Common myeloid progenitor, CD34-positive (primary cell): ENCODE measurements at regions of chr13 and their contacts with region 1.

Region 1: GRCh38 chr13:48580185-48580803 is 47.4 kb upstream of the RCBTB2 start:
- DNase-seq: peak; percentile 63 to 79 (median 73)
- H3K4me3 ChIP-seq: no peak overlapping the region
- H3K27ac ChIP-seq: no peak overlapping the region
- H3K4me1 ChIP-seq: peaks cover 7 to 28% (median 17%) of the 10 kb centered on the region in 4 experiments
- H3K27me3 ChIP-seq: peaks cover 0 to 21% (median 4%) of the 10 kb centered on the region in 5 experiments

Region 2: DNA sequence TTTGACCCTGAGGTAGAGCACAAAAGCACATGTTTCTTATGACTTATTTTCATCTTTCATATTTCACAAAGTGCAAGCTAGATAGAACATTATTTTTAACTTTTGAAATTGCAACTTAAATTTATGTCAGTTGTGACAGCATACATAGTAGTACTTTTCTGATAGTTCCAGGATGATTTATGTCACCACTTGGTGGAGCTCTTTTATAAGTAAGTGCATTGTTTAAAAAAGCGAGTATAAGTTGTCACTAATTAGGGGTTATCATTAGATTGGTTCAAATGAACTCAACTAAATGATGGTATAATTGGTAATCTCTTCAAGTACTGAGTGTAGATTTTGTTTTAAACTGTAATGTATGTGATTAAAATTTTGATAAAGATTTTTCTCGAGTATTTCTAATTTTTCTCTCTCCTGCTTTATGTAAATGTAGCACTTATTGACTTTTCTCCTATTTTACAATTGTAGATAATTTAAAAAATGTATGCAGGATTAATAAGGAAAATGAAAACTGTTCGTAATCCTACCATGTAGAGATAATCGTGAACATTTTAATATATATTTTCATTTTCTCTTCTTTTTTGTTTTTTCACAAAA is 245.7 kb before region 1 on chr13:
- CTCF ChIA-PET with region 1: interaction called, 72 read pairs
- POLR2A ChIA-PET with region 1: interaction called, 6 read pairs
- DNase-seq: peak; percentile 51 to 77 (median 75)
- H3K4me3 ChIP-seq: no peak overlapping the region
- H3K27ac ChIP-seq: no peak overlapping the region
- H3K4me1 ChIP-seq: peaks cover 0 to 6% (median 0%) of the 10 kb centered on the region in 4 experiments
- H3K27me3 ChIP-seq: no peaks in the 10 kb centered on the region

Region 3: DNA sequence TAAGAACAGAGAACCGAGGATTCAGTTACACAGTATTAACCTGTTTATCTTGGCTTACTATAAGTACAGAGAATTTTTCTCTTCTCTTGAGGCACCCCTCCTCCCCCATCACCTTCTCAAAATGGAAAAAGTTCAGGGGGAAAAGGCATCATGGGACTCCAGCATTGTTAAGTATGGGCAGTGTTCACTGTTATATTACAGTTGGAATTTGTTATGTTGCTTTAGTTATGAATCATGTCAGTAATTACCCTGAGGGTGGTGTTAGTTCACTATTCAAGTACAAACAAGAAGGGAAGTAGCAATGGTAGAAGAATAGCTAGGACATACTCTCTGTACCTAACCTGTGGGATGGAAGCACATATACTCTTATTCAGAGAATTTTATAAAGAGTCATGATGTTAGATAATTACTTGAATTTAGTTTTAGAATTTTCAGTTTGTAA is 179.4 kb before region 1 on chr13:
- CTCF ChIA-PET with region 1: interaction called, 45 read pairs
- POLR2A ChIA-PET with region 1: no interaction called
- DNase-seq: peak; percentile 36 to 72 (median 66)
- H3K4me3 ChIP-seq: peak overlapping the region in 2 of 7 experiments; percentile 45 to 54
- H3K27ac ChIP-seq: peak overlapping the region in 1 of 2 experiments; percentile 54
- H3K4me1 ChIP-seq: peaks cover 19 to 75% (median 44%) of the 10 kb centered on the region in 4 experiments
- H3K27me3 ChIP-seq: no peaks in the 10 kb centered on the region

Region 4: DNA sequence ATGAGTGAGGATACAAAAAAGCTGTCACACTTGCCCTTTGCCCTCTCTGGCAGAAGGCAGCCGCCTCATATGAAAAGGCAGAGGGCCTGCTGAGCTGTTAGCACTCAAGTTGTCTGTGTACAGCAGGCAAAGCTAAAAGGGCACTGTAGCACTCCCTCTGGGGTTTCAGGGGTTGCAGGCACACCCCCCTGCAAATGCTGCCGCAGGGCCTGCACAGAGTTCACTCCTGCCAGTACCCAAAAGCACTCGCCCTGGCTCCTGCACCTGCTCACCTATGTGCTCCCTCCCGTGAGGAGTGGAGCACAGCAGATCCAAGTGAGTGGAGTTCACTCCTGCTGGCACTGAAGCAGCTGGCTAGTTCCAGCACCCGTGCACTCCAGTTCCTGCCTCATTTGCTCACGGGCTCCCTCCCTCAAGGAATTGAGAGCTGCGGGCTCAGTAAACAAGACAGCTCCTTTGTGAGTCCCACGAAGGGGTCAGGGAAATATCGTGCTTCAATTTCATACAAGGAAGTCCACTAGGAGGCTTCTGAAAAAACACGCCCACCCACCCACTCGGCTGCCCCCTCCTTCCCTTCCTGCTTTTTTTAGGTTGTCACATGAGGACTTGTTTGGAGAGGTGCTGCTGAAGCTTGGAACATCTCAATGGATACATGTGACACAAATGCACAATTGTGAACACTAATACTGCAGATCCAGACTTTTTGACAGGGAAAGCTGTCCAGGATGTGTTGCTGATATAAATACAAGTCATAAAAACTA is 37.5 kb before region 1 on chr13:
- CTCF ChIA-PET with region 1: interaction called, 10 read pairs
- POLR2A ChIA-PET with region 1: no interaction called
- DNase-seq: peak in 2 of 3 donors; percentile 36 to 40
- H3K4me3 ChIP-seq: peak overlapping the region in 1 of 7 experiments; percentile 20
- H3K27ac ChIP-seq: no peak overlapping the region
- H3K4me1 ChIP-seq: peaks cover 0 to 15% (median 5%) of the 10 kb centered on the region in 4 experiments
- H3K27me3 ChIP-seq: peaks cover 0 to 9% (median 0%) of the 10 kb centered on the region in 5 experiments

Region 5: DNA sequence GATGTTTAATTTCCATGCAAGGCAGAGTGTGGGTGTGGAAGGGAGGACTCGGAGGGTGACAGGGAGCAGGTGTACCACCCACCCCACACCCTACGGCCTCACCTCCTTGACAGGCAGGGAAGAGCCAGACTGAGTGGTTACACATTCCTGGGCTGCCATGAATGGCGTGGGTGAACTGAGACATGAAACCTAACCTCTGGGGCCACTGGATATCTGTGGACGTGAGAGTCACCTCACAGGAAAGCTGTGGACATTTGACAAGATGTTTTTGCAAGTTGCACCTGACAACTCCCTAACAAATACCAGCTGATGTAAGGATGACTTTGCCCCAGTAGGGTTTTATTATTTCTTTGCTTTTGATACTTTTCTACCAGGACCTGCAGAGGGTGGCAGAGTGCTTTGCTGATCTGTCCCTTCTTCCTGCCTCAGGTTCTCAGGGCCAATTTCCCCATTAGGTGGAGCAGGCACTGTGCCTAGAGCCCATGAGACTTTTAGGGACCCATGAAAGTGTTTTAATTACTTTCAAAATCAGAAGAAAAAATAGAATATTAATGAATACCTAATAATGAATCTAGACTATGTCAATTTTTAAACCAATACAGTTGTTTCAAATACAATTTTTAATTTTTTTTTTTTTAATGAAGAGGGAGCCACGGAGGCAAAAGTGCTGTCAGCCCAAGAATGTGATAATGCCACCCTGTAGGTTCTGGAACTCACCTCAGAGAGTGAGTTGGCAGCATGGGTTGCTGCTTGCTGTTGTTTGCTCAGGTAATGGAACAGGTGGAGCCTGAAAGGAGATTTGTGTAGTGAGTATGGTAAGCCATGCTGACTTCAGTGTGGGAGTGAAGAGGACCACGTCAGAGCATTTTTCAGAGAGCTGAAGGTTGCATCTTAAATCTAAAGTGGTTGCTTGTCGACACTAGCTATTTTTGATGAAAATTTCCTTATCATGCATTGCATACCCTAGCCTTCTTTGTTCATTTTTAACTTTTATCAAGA is 15.4 kb after region 1 on chr13:
- CTCF ChIA-PET with region 1: interaction called, 48 read pairs
- POLR2A ChIA-PET with region 1: interaction called, 5 read pairs
- DNase-seq: peak; percentile 85 to 91 (median 88)
- H3K4me3 ChIP-seq: no peak overlapping the region
- H3K27ac ChIP-seq: no peak overlapping the region
- H3K4me1 ChIP-seq: peaks cover 2 to 17% (median 13%) of the 10 kb centered on the region in 4 experiments
- H3K27me3 ChIP-seq: peaks cover 0 to 5% (median 0%) of the 10 kb centered on the region in 5 experiments

Region 6: GRCh38 chr13:48769107-48769704 is 188.9 kb after region 1 on chr13:
- CTCF ChIA-PET with region 1: interaction called, 13 read pairs
- POLR2A ChIA-PET with region 1: no interaction called
- DNase-seq: peak; percentile 86 to 94 (median 89)
- H3K4me3 ChIP-seq: no peak overlapping the region
- H3K27ac ChIP-seq: no peak overlapping the region
- H3K4me1 ChIP-seq: peaks cover 0 to 9% (median 0%) of the 10 kb centered on the region in 4 experiments
- H3K27me3 ChIP-seq: no peaks in the 10 kb centered on the region